ENCODE measurements at regions of chr14 and their contacts with region 1.

Region 1: DNA sequence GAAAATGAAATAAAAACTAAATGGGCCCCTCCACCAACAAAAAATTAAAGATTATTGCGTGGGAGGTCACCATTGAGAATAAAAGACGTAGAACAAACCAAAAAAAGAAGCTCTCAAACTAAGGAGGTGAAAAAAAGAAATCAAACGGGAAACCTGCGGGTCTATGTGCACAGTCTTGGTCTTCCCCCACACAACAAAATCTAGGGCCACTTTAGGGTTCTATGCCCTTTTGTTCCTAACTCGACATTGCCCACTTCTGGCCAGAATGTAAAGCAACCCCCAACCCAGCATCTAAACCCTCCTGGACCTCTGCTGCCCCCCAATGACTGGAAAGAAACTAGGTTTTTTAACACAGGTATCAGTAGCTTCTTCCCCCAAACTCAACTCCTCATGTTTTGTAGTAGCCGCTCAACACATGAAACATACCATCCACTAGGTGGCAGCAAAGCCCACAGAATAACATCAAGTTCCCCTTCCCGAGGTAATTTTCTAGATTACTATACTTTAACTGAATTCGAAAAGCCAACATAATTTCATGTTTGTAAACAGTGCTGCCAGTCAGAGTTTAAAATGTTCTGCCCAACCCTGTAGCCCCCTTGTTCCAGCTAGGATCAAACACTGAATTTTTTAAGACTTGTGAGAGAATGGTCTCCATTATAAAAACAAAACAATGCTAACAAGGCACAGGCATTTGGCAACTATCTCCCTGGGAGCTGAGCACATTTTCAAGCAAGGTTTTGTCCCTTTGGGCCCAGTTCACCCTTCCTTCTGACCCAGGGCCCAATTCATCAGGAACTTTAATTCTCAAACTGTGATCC is 18.7 kb downstream of the DAD1 start:
- DNase-seq: peak; percentile 94
- ATAC-seq: peak; percentile 85
- H3K4me3 Mint-ChIP-seq: peak overlapping the region; percentile 81
- H3K27ac Mint-ChIP-seq: peak overlapping the region; percentile 95
- H3K4me1 Mint-ChIP-seq: peaks cover 67% of the 10 kb centered on the region
- H3K27me3 Mint-ChIP-seq: no peaks in the 10 kb centered on the region

Region 2: DNA sequence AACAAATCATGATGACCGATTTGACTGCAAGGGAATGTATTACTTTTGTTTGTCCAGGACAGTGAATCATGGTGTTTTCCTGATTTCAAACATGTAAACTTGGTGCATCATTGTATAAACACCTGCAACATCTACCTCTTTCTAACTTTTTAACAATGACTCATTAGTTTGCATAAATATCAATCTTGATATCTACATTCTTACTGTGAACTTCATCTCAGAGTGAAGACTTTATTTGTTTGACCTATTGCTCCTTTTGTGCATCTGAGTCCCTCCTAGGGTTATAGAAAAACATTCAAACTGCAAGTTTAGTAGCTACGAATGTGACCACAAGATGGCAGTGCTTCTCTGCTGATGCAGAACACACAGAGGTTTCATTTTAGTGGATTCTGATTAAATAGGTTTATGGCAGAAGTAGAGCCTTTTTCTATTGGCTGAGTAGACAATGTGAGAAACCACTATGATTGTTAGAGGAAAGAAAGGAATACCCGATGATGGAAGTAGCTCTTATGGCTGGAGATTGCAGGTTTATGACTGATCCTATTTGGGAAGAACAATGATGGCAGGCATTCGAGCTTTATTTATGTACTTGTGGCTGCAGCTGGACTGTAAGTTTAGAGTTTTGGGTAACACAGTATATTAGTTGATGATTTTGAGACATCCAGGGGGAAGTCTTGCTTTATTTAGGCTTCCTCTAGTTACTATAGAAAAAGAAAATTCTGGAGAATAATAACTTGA is 652.5 kb before region 1 on chr14:
- CTCF ChIA-PET with region 1: interaction called, 22 read pairs
- DNase-seq: peak; percentile 75
- ATAC-seq: peak; percentile 70
- H3K4me3 Mint-ChIP-seq: peak overlapping the region; percentile 65
- H3K27ac Mint-ChIP-seq: peak overlapping the region; percentile 56
- H3K4me1 Mint-ChIP-seq: peaks cover 48% of the 10 kb centered on the region
- H3K27me3 Mint-ChIP-seq: no peaks in the 10 kb centered on the region

Region 3: GRCh38 chr14:22221508-22221907 is 348.8 kb before region 1 on chr14:
- CTCF ChIA-PET with region 1: interaction called, 11 read pairs
- DNase-seq: no peak
- ATAC-seq: no peak
- H3K4me3 Mint-ChIP-seq: peak overlapping the region; percentile 11
- H3K27ac Mint-ChIP-seq: no peak overlapping the region
- H3K4me1 Mint-ChIP-seq: peaks cover 7% of the 10 kb centered on the region
- H3K27me3 Mint-ChIP-seq: no peaks in the 10 kb centered on the region

Region 4: GRCh38 chr14:22556990-22557623 is 13.2 kb before region 1 on chr14:
- CTCF ChIA-PET with region 1: interaction called, 642 read pairs
- DNase-seq: peak; percentile 95
- ATAC-seq: peak; percentile 34
- H3K4me3 Mint-ChIP-seq: peak overlapping the region; percentile 68
- H3K27ac Mint-ChIP-seq: peak overlapping the region; percentile 94
- H3K4me1 Mint-ChIP-seq: peaks cover 91% of the 10 kb centered on the region
- H3K27me3 Mint-ChIP-seq: peaks cover 3% of the 10 kb centered on the region

Region 5: GRCh38 chr14:22766456-22767322 is 196.3 kb after region 1 on chr14 and contains the start of gene OXA1L:
- CTCF ChIA-PET with region 1: interaction called, 25 read pairs
- DNase-seq: peak; percentile 98
- ATAC-seq: peak; percentile 92
- H3K4me3 Mint-ChIP-seq: peak within 1 kb of the TSS; percentile 86
- H3K27ac Mint-ChIP-seq: peak within 1 kb of the TSS; percentile 97
- H3K4me1 Mint-ChIP-seq: peaks cover 35% of the 10 kb centered on the region
- H3K27me3 Mint-ChIP-seq: no peaks in the 10 kb centered on the region
- total RNA-seq, gene OXA1L: 106 to 133 TPM

Region 6: DNA sequence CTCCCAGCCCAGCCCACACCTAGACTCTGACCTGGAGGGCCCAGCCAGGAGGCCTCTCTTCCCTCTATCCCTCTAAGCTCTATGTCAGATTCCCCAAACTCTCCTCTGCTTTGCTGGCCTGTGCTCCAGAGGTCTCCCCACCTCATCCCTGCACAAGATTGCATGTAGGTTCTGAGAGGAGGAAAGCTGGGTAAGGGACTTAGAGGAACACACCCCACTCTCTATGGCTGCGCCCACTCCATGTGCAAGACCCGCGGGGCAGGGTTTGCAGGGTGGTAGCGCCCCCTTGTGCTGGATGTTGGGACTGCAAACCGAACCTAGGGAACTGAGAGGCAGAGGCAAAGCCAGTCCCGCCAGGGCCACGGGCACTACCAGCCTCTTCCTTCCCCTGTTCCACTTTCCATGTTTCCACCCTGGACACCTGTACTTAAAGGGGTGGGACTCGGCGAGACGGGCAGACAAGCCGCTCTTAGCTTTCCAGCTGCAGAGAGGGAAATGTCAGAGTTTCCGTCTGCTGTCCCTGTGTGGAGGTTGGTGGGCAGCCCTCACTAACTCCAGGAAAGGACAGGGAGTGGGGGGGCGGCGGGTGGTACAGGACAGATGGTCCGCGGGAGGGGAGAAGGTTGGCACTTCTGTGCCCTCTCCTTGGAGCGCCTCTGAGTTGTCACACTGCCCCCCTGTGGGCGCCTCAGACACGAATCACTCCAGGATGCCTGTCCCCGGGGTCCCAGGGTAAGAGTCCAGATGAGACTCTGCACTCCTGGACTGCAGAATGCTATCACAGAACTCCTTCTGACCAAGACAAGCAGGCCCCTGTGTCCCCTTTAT is 282.8 kb after region 1 on chr14:
- CTCF ChIA-PET with region 1: interaction called, 103 read pairs
- DNase-seq: peak; percentile 93
- ATAC-seq: peak; percentile 87
- H3K4me3 Mint-ChIP-seq: peak overlapping the region; percentile 70
- H3K27ac Mint-ChIP-seq: peak overlapping the region; percentile 79
- H3K4me1 Mint-ChIP-seq: peaks cover 37% of the 10 kb centered on the region
- H3K27me3 Mint-ChIP-seq: peaks cover 32% of the 10 kb centered on the region

Measured in activated CD8-positive, alpha-beta memory T cell treated with anti-CD3 and anti-CD28 coated beads, Interleukin-2, amount 10 ng/mL, durations not matched to agents 7 days and 5 days (primary cell).